ENCODE measurements at regions of chr4 and their contacts with region 1.

Region 1: DNA sequence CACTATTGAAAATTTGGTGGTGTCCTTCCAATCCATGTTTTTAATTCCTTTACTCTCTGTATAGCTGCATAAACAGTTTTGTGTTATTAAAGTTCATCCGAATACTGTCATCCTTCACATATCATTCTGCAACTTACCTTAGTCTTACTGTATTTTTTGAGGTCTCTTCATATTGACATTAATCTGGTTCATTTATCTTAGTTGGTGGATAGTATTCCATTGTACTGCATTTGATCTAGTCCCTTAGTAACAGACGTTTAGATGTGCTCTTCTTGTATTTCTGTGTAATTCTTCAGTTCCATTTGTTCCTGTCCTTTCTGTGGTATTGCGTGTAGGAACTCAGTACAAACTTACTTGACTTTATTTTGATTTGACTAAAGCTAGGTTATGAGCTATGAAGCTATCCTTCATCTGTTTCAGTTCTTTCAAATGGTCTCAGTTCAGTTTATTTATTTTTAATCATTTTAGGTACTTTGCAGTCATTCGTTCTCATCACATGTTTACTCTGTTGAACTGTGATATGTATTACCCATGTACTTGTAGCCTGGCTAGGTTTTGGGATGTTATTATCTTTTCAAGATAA is 41.3 kb downstream of the RAPGEF2 start:
- DNase-seq: no peak
- H3K4me3 ChIP-seq: no peak overlapping the region
- H3K4me3 Mint-ChIP-seq: no peak overlapping the region
- H3K27ac Mint-ChIP-seq: no peak overlapping the region
- H3K4me1 ChIP-seq: peaks cover 35% of the 10 kb centered on the region
- H3K4me1 Mint-ChIP-seq: peaks cover 36% of the 10 kb centered on the region
- H3K27me3 ChIP-seq: no peaks in the 10 kb centered on the region
- H3K27me3 Mint-ChIP-seq: no peaks in the 10 kb centered on the region
- CTCF ChIP-seq: no peak

Region 2: GRCh38 chr4:158652920-158653319 is 491.3 kb before region 1 on chr4:
- CTCF ChIA-PET with region 1: no interaction called
- POLR2A ChIA-PET with region 1: no interaction called
- intact Hi-C with region 1: no loop called
- DNase-seq: no peak
- H3K4me3 ChIP-seq: no peak overlapping the region
- H3K4me3 Mint-ChIP-seq: no peak overlapping the region
- H3K27ac Mint-ChIP-seq: no peak overlapping the region
- H3K4me1 ChIP-seq: no peaks in the 10 kb centered on the region
- H3K4me1 Mint-ChIP-seq: no peaks in the 10 kb centered on the region
- H3K27me3 ChIP-seq: no peaks in the 10 kb centered on the region
- H3K27me3 Mint-ChIP-seq: peaks cover 3% of the 10 kb centered on the region
- CTCF ChIP-seq: no peak

Region 3: DNA sequence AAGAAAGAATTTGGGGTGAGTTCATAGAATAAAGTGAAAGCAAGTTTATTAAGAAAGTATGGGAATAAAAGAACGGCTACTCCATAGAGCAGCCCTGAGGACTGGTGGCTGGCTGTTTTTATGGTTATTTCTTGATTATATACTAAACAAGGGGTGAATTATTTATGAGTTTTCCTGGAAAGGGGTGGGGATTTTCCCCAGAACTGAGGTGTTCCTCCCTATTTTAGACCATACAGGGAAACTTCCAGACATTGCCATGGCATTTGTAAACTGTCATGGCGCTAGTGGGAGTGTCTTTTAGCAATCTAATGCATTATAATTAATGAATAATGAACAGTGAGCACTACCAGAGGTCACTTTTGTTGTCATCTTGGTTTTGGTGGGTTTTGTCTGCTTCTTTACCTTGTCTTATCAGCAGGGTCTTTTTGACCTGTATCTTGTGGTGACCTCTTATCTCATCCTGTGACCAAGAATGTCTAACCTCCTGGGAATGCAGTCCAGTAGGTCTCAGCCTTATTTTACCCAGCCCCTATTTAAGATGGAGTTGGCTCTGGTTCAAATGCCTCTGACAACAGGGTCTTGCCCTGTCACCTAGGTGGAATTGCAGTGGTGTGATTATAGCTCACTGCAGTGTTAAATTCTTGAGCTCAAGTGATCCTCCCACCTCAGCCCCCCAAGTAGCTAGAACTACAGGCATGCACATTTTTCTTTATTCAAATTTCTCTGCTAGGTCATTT is 14.2 kb before region 1 on chr4:
- CTCF ChIA-PET with region 1: no interaction called
- POLR2A ChIA-PET with region 1: no interaction called
- intact Hi-C with region 1: loop called (anchors 2 kb)
- DNase-seq: peak; percentile 71 to 77
- H3K4me3 ChIP-seq: no peak overlapping the region
- H3K4me3 Mint-ChIP-seq: peak overlapping the region; percentile 61
- H3K27ac Mint-ChIP-seq: peak overlapping the region; percentile 79
- H3K4me1 ChIP-seq: peaks cover 66% of the 10 kb centered on the region
- H3K4me1 Mint-ChIP-seq: peaks cover 27% of the 10 kb centered on the region
- H3K27me3 ChIP-seq: no peaks in the 10 kb centered on the region
- H3K27me3 Mint-ChIP-seq: no peaks in the 10 kb centered on the region
- CTCF ChIP-seq: no peak

Region 4: DNA sequence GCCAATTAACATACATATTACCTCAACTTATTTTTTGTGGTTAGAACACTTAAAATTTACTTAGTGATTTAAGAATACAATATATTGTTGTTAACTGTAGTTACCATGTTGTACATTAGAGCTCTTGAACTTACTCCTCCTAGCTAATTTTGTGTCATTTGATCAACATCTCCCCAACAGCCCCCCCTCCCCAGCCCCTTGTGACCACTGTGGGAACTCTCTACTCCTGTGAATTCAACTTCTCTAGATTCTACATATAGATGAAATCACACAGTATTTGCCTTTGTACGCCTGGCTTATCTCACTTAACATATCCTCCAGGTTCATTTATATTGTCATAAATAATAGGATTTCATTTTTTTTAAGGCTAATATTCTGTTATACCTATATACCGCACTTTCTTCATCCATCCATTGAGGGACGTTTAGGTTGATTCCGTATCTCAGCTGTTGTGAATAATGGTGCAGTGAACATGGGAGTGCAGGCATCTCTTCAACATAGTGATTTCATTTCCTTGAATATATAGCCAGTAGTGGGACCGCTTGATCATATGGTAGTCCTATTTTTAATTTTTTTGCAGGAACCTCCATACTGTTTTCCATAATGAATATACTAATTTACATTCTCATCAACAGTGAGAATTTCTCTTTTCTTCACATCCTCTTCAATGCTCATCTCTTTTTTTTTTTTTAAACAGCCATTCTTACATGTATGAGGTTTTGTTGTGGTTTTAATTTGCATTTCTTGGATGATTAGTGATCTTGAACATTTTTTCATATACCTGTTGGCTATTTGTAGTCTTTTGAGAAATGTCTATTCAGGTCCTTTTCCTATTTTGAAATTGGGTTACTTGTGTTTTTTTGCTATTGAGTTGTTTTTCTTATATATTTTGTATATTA is 25.4 kb after region 1 on chr4:
- CTCF ChIA-PET with region 1: no interaction called
- POLR2A ChIA-PET with region 1: no interaction called
- intact Hi-C with region 1: no loop called
- DNase-seq: no peak
- H3K4me3 ChIP-seq: no peak overlapping the region
- H3K4me3 Mint-ChIP-seq: no peak overlapping the region
- H3K27ac Mint-ChIP-seq: no peak overlapping the region
- H3K4me1 ChIP-seq: peaks cover 66% of the 10 kb centered on the region
- H3K4me1 Mint-ChIP-seq: peaks cover 67% of the 10 kb centered on the region
- H3K27me3 ChIP-seq: no peaks in the 10 kb centered on the region
- H3K27me3 Mint-ChIP-seq: no peaks in the 10 kb centered on the region
- CTCF ChIP-seq: no peak

Region 5: DNA sequence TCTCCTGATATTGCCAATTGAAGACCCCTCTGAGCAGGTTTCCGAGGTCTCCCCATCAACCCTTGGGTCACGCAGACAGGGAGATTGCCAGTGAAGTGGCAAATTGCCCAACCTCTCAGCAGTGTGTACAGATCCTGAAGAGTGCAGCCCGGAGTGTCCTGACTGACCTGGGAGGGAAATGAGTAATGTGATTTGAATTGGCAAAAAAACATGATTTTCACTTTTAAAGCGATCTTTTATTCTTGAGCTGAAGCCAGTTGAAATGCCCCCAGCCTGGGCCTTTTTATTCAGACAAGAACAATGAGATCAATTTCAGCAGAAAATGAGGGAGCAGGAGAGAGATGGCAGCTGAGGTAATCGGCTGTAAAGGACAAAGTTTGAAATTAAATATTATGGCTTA is 360.5 kb after region 1 on chr4:
- CTCF ChIA-PET with region 1: no interaction called
- POLR2A ChIA-PET with region 1: no interaction called
- intact Hi-C with region 1: no loop called
- DNase-seq: no peak
- H3K4me3 ChIP-seq: no peak overlapping the region
- H3K4me3 Mint-ChIP-seq: no peak overlapping the region
- H3K27ac Mint-ChIP-seq: no peak overlapping the region
- H3K4me1 ChIP-seq: no peaks in the 10 kb centered on the region
- H3K4me1 Mint-ChIP-seq: no peaks in the 10 kb centered on the region
- H3K27me3 ChIP-seq: no peaks in the 10 kb centered on the region; the same call in 1 of the 2 replicates
- H3K27me3 Mint-ChIP-seq: peaks cover 24% of the 10 kb centered on the region
- CTCF ChIP-seq: no peak